Activated B cell treated with CpG ODN at 0.5 μM for 24 hours (primary cell): ENCODE measurements at regions of chr19 and their contacts with region 1.

Region 1: GRCh38 chr19:58408152-58409009 is at the start of gene ZNF584:
- DNase-seq: peak; percentile 93
- ATAC-seq: peak; percentile 95
- H3K4me3 Mint-ChIP-seq: peak within 1 kb of the TSS; percentile 95
- H3K27ac Mint-ChIP-seq: peak within 1 kb of the TSS; percentile 92
- H3K4me1 Mint-ChIP-seq: peaks cover 32% of the 10 kb centered on the region
- H3K27me3 Mint-ChIP-seq: no peaks in the 10 kb centered on the region
- CTCF ChIP-seq: no peak
- total RNA-seq, gene ZNF584: 8.6 and 9.6 TPM in 2 replicates

Region 2: DNA sequence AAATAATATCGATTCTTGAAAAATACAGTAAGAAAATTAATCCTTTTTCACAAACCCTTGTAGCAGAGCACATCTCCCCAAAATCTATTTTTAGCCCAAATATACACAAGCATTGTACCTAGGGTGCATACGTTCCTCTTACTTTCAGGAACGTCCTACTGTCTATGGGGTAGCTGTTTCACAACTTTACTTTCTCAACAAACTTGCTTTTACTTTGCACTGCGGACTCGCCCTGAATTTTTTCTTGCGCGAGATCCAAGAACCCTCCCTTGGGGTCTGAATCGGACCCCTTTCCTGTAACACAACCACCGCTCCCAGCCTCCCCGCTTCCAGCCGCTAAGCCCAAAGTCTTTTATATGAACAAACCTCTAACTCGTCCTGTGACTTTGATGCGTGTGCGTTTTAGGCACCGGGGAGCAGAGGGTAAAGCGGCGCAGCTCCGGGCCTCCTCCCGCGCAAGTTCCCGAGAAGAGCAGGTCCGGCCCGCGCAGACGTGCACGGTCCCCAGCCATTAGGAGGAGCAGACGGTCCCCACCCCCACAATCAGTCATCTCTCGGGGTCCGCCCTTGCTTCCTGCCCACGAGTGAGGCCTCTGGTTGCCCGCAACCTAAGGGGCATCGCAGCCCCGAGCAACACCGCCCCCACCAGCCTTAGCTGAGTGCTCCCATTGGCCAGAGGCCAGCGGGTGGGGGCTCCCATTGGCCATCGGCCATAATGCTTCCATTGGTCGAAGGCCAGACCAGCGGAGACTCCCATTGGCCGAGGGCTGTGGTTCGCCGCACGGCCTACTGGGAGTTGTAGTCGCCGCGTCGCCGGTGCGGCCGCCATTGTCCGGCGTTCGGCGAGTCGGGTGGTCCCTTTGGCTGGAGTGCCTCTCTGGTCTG is 130.0 kb before region 1 on chr19 and contains the start of gene ZNF8:
- CTCF ChIA-PET with region 1: no interaction called
- POLR2A ChIA-PET with region 1: no interaction called
- intact Hi-C with region 1: loop called (anchors 1 kb)
- DNase-seq: peak; percentile 88
- ATAC-seq: peak; percentile 98
- H3K4me3 Mint-ChIP-seq: peak within 1 kb of the TSS; percentile 91
- H3K27ac Mint-ChIP-seq: peak within 1 kb of the TSS; percentile 95
- H3K4me1 Mint-ChIP-seq: peaks cover 44% of the 10 kb centered on the region
- H3K27me3 Mint-ChIP-seq: no peaks in the 10 kb centered on the region
- CTCF ChIP-seq: no peak
- total RNA-seq, gene ZNF8: 4.7 and 5.3 TPM in 2 replicates

Region 3: DNA sequence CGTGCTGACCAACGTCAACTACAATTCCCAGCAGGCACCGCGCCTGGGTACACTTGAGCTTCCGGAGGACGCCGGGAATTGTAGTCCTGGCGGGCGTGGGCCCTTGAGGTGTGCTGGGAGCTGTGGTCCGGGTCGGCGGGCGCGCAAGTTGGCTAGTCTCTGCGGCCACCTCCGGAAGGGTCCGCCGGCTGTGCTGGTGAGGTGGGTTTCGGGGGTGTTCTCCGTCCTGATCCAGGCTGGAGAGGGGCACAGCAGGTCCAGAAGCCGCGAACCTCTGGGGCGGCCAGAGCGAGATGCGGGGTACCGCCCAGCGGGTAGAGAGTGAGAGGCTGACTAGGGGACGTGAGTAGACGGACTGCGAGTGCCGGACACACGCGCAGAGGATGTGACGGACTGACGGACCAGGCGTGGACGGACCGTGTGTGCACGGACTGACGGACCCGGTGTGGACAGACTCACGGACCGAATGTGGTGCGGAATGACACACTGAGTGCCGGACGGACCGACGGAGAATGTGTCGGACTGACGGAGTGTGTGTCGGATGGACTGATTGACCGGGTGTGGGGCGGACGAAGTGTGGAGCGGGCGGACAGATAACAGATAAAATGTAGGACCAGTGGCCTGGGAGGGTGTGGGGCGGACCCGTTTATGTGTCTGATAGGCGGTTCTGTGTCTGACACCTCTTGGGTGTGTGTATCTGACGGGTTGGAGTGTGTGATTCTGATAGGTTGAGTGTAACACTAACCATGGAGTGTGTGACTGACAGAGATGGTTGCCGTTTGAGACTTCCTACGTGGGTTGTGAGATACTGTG is 81.3 kb before region 1 on chr19 and contains the start of gene ZSCAN22:
- CTCF ChIA-PET with region 1: no interaction called
- POLR2A ChIA-PET with region 1: no interaction called
- intact Hi-C with region 1: loop called (anchors 1 kb)
- DNase-seq: peak; percentile 82
- ATAC-seq: peak; percentile 88
- H3K4me3 Mint-ChIP-seq: no peak within 1 kb of the TSS
- H3K27ac Mint-ChIP-seq: no peak within 1 kb of the TSS
- H3K4me1 Mint-ChIP-seq: peaks cover 2% of the 10 kb centered on the region
- H3K27me3 Mint-ChIP-seq: no peaks in the 10 kb centered on the region
- CTCF ChIP-seq: no peak
- total RNA-seq, gene ZSCAN22: 4.7 and 4.8 TPM in 2 replicates

Region 4: DNA sequence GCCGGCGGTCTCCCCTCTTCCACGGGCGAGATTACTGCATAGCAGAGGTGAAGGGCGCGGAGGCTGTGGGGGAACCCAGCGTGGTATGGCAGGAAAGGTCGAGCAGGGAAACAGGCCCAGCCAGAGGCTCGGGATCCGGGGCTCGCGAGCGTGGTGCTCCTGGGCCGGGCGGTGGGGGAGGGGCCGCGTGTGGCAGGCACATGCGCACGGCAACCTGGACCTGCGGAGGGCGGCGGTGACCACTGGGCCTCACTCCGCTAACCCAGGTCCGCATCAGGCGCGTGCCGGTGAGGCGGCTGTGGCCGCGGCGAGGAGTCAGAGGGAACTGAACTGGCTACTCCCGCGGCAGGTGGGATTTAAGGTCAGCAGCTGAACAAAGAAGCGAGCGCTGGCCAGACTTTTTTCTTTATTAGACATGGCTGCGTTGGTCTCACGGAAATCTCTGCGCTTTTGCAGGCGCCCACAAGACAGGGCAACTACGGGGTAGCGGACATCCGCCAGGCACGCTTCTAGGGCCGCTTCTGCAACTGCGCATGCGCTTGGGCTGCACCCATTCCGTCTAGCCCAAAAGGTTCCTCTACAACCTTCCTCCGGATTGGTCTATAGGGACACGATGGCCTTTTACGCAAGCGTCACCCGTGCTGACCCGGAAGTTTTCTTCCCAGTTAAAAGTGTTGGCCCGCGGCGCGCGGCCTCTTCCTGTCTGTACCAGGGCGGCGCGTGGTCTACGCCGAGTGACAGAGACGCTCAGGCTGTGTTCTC is 21.6 kb before region 1 on chr19 and contains the start of gene RPS5:
- CTCF ChIA-PET with region 1: no interaction called
- POLR2A ChIA-PET with region 1: interaction called, 10 read pairs
- intact Hi-C with region 1: loop called (anchors 1 kb)
- DNase-seq: peak; percentile 85
- ATAC-seq: peak; percentile 89
- H3K4me3 Mint-ChIP-seq: peak within 1 kb of the TSS; percentile 95
- H3K27ac Mint-ChIP-seq: peak within 1 kb of the TSS; percentile 98
- H3K4me1 Mint-ChIP-seq: peaks cover 50% of the 10 kb centered on the region
- H3K27me3 Mint-ChIP-seq: no peaks in the 10 kb centered on the region
- CTCF ChIP-seq: no peak
- total RNA-seq, gene RPS5: 1,982 and 2,193 TPM in 2 replicates

Region 5: DNA sequence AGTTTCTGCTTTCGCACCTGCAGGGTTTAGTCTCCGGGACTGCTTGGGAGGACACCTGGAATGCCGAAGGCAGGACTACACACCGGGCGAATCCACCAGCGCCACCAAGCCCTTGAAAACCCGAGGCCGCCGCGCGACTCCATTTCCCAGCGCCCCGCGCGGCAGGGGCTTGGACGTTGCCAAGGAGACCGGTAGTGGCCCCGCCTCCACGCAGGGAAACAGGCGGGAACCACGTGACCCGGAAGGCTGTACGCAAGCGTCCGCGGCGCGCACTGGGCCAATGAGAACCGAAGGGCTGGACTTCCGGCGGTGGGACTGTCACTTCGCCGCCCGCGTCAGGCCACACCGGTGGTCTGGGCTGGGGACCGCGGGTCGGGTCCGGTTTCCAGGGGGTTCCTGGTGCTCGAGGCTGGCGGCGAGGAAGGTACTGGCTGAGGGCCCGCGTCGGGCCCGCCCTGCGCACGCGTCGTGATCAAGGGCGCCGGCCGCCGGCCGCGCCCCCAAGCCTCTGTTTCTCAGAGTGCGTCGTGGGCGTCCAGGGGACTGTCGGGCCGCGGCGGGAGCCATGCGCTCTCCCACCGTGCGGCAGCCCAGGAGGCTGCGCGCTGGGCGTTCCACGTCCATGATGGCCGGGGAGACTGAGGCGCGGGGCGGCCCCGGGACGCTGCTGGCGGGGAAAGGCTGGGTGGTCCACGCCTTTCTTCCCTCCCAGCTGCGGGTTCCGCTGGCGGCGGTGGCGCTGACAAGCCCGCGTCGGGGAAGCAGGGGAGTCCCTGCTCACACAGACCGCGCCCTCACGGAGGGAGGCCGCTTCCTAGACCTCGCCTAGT is 58.6 kb after region 1 on chr19 and contains the start of gene ZNF324:
- CTCF ChIA-PET with region 1: interaction called, 3 read pairs
- POLR2A ChIA-PET with region 1: interaction called, 3 read pairs
- intact Hi-C with region 1: loop called (anchors 1 kb)
- DNase-seq: peak; percentile 95
- ATAC-seq: peak; percentile 92
- H3K4me3 Mint-ChIP-seq: peak within 1 kb of the TSS; percentile 81
- H3K27ac Mint-ChIP-seq: peak within 1 kb of the TSS; percentile 56
- H3K4me1 Mint-ChIP-seq: peaks cover 26% of the 10 kb centered on the region
- H3K27me3 Mint-ChIP-seq: no peaks in the 10 kb centered on the region
- CTCF ChIP-seq: no peak
- total RNA-seq, gene ZNF324: 11.8 and 13.1 TPM in 2 replicates

Region 6: DNA sequence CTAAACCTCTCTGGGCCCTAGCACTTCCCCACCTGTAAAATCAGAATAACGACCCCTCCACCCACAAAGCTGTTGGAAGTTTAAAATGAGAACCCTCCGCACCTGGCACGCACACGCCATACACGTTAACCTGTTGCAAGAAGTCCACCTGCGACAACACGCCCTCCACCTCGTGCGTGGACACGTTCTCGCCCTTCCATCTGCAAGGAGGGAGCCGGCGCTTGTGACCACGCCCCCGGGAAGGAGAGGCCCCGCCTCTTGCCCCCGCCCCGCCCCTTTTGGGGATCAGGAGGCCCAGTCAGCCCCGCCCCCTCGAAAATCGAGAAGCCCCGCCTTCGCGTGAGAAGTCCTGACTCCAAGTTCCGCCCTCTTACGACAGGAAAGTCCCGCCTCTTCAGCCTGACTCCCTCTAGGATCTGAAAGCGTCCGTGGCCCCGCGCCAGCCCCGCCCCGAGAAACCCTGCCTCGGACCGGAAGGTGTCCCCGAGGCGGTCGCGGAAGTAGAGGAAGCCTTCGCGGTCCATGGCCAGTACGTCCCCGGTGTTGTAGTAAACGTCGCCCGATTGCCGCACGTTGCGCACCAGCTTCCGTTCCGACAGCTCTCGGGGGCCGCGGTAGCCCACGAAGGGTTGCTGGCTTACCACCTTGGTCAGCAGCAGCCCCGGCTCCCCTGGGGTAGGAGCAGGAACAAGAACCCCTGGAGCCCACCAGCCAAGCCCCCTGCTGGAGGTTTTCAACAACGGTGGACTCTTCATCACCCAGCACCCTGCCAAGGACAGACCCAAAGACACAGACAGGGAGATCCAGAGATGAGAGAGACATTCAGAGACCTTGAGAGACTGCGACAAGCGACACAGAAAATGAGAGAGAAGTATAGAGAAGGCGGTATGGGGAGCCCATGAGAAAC is 90.9 kb after region 1 on chr19:
- CTCF ChIA-PET with region 1: no interaction called
- POLR2A ChIA-PET with region 1: no interaction called
- intact Hi-C with region 1: no loop called
- DNase-seq: peak; percentile 89
- ATAC-seq: peak; percentile 92
- H3K4me3 Mint-ChIP-seq: peak overlapping the region; percentile 92
- H3K27ac Mint-ChIP-seq: peak overlapping the region; percentile 90
- H3K4me1 Mint-ChIP-seq: peaks cover 24% of the 10 kb centered on the region
- H3K27me3 Mint-ChIP-seq: no peaks in the 10 kb centered on the region
- CTCF ChIP-seq: no peak

Region 7: GRCh38 chr19:58572818-58573657 is 164.7 kb after region 1 on chr19 and contains the start of gene MZF1:
- CTCF ChIA-PET with region 1: no interaction called
- POLR2A ChIA-PET with region 1: interaction called, 4 read pairs
- intact Hi-C with region 1: loop called (anchors 1 kb)
- DNase-seq: peak; percentile 100
- ATAC-seq: peak; percentile 61
- H3K4me3 Mint-ChIP-seq: peak within 1 kb of the TSS; percentile 97
- H3K27ac Mint-ChIP-seq: peak within 1 kb of the TSS; percentile 100
- H3K4me1 Mint-ChIP-seq: peaks cover 44% of the 10 kb centered on the region
- H3K27me3 Mint-ChIP-seq: no peaks in the 10 kb centered on the region
- CTCF ChIP-seq: no peak
- total RNA-seq, gene MZF1: 41.9 and 54.5 TPM in 2 replicates